ENCODE measurements at regions of chr2 and their contacts with region 1.

Region 1: DNA sequence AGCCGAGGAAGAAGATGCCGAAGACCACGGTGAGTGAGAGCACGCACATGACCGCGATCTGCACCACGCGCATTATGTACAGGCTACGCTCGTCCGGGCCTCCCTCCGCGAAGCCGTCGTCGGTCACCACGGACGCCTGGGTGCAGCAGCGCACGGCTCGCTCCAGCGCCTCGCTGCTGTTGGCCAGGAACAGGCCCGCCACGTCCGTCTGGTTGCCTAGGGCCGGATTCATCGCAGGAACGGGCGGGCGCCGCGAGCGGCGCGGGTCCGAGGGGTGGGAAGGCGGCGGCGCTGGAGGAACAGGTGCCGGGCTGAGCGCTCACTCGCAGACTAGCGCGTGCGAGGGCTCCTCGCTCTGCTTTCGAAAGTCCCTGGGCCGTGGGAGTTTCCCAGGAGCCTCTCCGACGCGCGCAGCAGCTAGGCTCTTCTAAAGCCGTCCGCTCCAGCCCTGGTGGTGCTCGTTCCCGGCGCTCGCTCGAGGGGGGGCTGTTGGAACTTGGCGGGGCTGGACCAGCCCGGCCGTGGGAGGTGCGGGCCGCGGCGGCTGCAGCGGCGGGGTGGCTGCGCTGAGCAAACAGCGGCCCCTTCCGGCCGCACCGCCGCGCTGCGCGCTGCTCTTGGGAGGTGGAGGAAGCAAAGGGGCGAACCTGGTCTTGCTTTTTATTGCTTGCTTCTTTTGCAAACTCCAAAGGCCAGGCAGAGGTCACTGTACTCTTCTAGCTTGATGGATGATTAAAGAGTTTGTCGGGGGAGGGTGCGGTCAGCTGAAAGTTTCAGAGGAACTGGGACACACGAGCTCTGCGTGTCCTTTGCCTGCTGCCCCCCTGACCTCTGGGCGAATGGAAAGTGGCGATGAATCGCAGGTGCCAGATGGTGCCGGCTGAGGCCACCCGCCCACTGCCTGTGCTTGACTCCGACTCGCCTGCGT is at the start of gene RPRM:
- DNase-seq: peak; percentile 72
- ATAC-seq: peak; percentile 90
- H3K4me3 ChIP-seq: peak within 1 kb of the TSS; percentile 65
- H3K27ac ChIP-seq: peak within 1 kb of the TSS; percentile 54
- H3K4me1 ChIP-seq: peaks cover 11% of the 10 kb centered on the region
- H3K27me3 ChIP-seq: peaks cover 32% of the 10 kb centered on the region
- CTCF ChIP-seq: peak; percentile 88
- total RNA-seq, gene RPRM: 1.4 and 2.6 TPM in 2 replicates

Region 2: GRCh38 chr2:152740743-152741328 is 737.8 kb before region 1 on chr2:
- CTCF ChIA-PET with region 1: no interaction called
- POLR2A ChIA-PET with region 1: no interaction called
- intact Hi-C with region 1: loop called (anchors 2 kb)
- DNase-seq: peak; percentile 80
- ATAC-seq: no peak
- H3K4me3 ChIP-seq: no peak overlapping the region
- H3K27ac ChIP-seq: no peak overlapping the region
- H3K4me1 ChIP-seq: no peaks in the 10 kb centered on the region
- H3K27me3 ChIP-seq: no peaks in the 10 kb centered on the region
- CTCF ChIP-seq: peak; percentile 90

Region 3: GRCh38 chr2:153163058-153163457 is 315.5 kb before region 1 on chr2:
- CTCF ChIA-PET with region 1: no interaction called
- POLR2A ChIA-PET with region 1: no interaction called
- intact Hi-C with region 1: loop called (anchors 5 kb)
- DNase-seq: peak; percentile 45
- ATAC-seq: no peak
- H3K4me3 ChIP-seq: no peak overlapping the region
- H3K27ac ChIP-seq: no peak overlapping the region
- H3K4me1 ChIP-seq: no peaks in the 10 kb centered on the region
- H3K27me3 ChIP-seq: 0 out of 2 replicates have a peak, but pooled peaks cover 5% of the 10 kb centered on the region
- CTCF ChIP-seq: peak; percentile 78

Measured in PC-3 (cell line).